Right ventricle myocardium inferior (tissue), 1 donor: ENCODE measurements at regions of chr5 and their contacts with region 1.

Region 1: GRCh38 chr5:36151434-36152323 is at the starts of genes LMBRD2 and SKP2:
- DNase-seq: peak; percentile 99
- ATAC-seq: peak; percentile 100
- total RNA-seq, gene LMBRD2: 10.4 TPM
- total RNA-seq, gene SKP2: 6.3 TPM

Region 2: DNA sequence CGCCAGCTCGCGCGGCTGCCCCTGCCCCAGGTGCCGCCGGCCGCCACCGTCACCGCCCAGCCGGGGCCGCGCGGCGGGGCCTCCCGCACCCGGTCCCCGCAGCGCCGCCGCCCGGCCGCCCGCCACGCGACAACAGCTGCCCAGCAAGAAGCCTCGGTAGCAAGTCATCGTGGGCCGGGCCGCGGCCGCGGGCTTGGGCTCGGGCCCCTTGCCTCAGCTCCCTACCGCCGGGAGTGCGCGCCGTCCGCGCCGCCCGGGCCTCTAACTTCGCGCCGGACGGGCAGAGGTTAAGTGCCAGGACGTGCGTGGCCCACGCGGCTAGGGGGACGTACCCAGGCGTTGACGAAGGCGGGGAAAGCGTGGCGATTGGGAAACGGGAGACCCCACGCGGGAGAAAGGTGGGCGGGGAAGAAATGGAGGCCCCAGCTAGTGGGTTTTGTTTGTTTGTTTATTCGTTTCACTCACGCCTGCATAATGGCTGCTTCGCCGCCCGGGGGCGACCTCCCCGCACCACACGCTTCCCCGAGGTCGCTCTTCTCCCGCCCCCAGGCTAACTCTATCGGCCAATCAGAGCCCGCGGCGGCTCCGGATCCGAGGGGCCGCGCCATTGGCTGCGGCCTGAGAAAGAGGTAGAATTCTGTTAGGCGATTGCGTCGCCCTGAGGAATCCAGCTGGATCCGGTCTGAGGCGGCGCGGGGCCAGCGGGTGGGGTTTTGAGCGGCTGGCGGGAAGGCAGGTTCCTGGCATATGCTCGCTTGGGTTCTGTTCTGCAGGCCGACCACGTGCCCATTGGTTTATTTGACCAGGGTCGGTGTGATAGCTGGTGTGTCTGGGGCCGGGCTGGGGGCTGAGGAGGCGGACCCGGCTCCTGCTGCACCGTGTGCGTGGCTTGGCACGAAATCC is 90.2 kb after region 1 on chr5 and contains the start of gene NADK2:
- intact Hi-C with region 1: loop called (anchors 5 kb)
- DNase-seq: peak; percentile 97
- ATAC-seq: peak; percentile 95
- total RNA-seq, gene NADK2: 39.4 TPM